ENCODE measurements at regions of chr11 and their contacts with region 1.

Region 1: DNA sequence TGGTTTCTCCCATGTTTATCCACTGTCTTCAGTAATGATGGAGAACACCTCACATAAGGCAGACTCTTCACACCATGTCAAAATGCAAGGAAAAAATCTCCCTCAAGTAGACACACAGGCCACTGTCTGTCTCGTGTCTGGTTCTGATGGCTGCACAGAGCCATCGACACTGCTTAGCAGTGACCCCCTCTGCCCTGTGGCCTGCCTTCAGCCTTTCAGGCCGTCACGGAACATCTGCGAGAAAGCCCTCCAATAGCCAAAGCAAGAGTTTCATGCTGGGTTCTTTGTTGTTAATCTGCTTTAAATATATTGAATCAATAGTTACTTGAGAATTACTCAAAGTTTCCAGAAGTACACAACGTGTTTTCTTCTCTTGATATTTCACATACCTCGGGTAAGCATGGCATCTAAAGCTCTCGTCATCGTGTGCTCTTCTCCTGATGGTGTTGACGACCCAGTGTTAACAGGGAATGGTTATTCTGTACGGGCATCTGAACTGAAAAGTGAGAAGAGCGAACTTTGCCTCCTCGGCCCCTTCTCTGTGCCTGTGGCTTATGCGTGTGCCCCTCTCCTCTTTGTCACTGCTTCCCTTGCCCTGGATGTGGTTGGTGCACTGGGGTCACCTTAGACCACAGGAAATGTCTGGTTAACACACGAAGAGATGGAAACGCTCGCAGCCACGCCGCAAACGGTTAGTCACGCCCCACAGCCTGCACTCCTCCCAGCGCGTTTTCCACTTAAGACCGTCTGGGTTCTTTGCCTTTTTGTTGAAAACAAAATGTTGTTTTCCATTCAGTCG is 33.4 kb upstream of the CTTN start:
- DNase-seq: peak; percentile 65 to 69
- ATAC-seq: peak; percentile 77 to 96 (median 81)
- H3K4me3 ChIP-seq: no peak overlapping the region
- H3K4me3 Mint-ChIP-seq: peak overlapping the region; percentile 85
- H3K27ac ChIP-seq: no peak overlapping the region
- H3K27ac Mint-ChIP-seq: peak overlapping the region; percentile 74 to 86
- H3K4me1 ChIP-seq: peaks cover 35% of the 10 kb centered on the region
- H3K4me1 Mint-ChIP-seq: peaks cover 31 to 34% of the 10 kb centered on the region in 2 donors
- H3K27me3 ChIP-seq: peaks cover 7% of the 10 kb centered on the region
- H3K27me3 Mint-ChIP-seq: peaks cover 6 to 8% of the 10 kb centered on the region in 2 donors
- CTCF ChIP-seq: no peak

Region 2: GRCh38 chr11:70352601-70353000 is 12.3 kb before region 1 on chr11:
- intact Hi-C with region 1: loop called (anchors 2 kb)
- DNase-seq: peak in 1 of 2 donors; percentile 12
- ATAC-seq: peak; percentile 71 to 80 (median 77)
- H3K4me3 ChIP-seq: no peak overlapping the region
- H3K4me3 Mint-ChIP-seq: peak overlapping the region; percentile 71
- H3K27ac ChIP-seq: peak overlapping the region; percentile 2
- H3K27ac Mint-ChIP-seq: peak overlapping the region; percentile 59 to 90
- H3K4me1 ChIP-seq: peaks cover 26% of the 10 kb centered on the region
- H3K4me1 Mint-ChIP-seq: peaks cover 33 to 41% of the 10 kb centered on the region in 2 donors
- H3K27me3 ChIP-seq: no peaks in the 10 kb centered on the region
- H3K27me3 Mint-ChIP-seq: no peaks in the 10 kb centered on the region
- CTCF ChIP-seq: no peak

Region 3: DNA sequence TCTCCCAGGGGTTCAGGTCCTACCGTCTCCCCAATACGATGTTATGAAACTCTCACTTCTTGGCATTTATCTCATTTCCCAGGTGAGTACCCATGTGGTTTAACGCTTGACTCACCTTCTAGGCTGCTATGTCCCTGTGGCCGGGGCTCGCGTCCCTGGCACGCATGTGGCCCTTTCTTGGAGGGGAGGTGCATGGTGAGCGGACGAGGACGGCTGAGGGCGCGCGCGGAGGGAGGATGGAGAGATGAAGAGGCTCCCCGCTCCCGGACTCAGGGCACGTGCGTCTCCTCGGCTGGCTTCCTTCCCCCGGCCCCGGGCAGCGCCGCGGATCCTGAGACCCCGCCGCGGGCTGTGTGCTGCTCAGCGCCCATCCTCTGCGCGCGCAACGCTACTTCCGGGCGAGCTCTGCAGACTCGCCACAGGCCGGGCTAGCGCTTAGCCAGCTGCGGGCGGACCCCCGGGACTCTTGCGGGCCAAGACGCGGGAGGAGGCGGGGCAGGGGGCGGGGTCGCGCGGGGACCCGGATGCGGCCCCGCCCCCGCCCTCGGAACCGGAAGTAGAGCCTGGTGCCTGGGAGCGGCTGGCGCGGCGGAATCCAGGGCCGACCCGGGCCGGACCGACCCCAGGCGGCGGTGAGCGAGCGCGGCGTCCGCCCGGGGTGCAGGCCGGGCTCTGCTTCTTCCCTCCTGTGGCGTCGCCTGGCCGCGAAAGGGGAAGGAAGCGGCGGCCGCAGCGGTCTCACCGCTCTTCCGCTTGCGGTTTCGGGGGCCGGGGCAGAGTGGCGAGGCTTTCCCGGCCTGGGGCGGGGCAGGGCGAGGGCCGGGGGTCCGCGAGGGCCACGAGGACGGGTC is 33.3 kb after region 1 on chr11 and contains the start of gene CTTN:
- intact Hi-C with region 1: no loop called
- DNase-seq: peak; percentile 42 to 66
- ATAC-seq: peak; percentile 67 to 75 (median 71)
- H3K4me3 ChIP-seq: peak within 1 kb of the TSS; percentile 21
- H3K4me3 Mint-ChIP-seq: peak within 1 kb of the TSS; percentile 75
- H3K27ac ChIP-seq: no peak within 1 kb of the TSS
- H3K27ac Mint-ChIP-seq: peak within 1 kb of the TSS; percentile 32 to 75
- H3K4me1 ChIP-seq: peaks cover 25% of the 10 kb centered on the region
- H3K4me1 Mint-ChIP-seq: peaks cover 18 to 22% of the 10 kb centered on the region in 2 donors
- H3K27me3 ChIP-seq: peaks cover 56% of the 10 kb centered on the region
- H3K27me3 Mint-ChIP-seq: peaks cover 56 to 64% of the 10 kb centered on the region in 2 donors
- CTCF ChIP-seq: no peak
- total RNA-seq, gene CTTN: 0.59 to 5.8 (median 1.8) TPM

Region 4: DNA sequence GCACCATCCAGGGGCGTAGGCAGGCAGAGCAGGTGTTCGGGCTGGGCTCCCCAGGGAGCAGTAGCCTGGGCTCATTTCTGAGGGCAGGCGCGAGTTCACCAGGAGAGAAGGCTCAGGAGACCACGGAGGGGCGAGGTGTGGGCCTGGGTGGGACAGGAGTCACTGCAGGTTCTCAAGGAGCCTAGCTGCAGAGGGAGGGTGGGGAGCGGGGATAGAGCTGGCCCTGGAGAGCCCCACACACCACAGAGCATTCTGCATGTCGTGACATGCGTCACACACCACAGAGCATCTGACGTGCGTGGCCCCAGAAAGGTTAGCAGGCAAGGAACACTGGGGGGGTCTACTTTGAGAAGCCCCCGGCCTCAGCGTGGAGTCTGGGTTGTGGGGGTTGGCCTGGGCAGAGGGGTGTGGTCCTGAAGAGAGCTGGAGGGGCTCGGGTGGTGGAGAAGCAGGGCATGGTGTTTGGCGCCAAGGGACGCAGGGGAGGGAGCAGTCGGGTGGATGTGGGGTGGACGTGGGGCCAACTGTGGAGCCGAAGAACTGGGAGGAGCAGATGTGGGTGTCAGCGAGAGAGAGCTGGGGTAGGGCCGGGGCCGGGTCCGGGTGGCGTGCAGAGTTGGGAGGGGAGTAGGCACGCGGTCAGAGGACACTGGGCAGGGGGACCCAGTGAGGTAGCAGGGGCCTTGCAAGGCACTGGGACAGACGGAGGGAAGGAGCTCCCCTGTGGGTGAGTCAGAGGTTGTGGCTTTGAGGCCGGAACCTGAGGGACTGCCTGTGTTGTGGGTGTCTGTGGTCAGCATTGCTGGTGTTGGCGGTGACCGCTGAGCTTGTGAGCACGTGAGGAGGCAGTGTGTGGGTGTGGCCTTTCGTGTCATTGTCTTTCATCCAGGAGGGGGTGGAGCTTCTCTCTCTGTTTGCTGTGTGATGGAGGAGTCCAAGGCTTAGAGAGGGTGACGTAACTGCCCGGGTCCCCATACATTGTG is 58.9 kb after region 1 on chr11:
- intact Hi-C with region 1: loop called (anchors 2 kb)
- DNase-seq: peak; percentile 59 to 83
- ATAC-seq: peak; percentile 81 to 88 (median 82)
- H3K4me3 ChIP-seq: no peak overlapping the region
- H3K4me3 Mint-ChIP-seq: peak overlapping the region; percentile 83
- H3K27ac ChIP-seq: no peak overlapping the region
- H3K27ac Mint-ChIP-seq: peak overlapping the region; percentile 93 to 94
- H3K4me1 ChIP-seq: peaks cover 38% of the 10 kb centered on the region
- H3K4me1 Mint-ChIP-seq: peaks cover 34 to 40% of the 10 kb centered on the region in 2 donors
- H3K27me3 ChIP-seq: peaks cover 55% of the 10 kb centered on the region
- H3K27me3 Mint-ChIP-seq: peaks cover 46 to 63% of the 10 kb centered on the region in 2 donors
- CTCF ChIP-seq: no peak

Measured in natural killer cell (primary cell).